Activated B cell treated with CpG ODN at 0.5 μM for 24 hours (primary cell): ENCODE measurements at regions of chr6 and their contacts with region 1.

Region 1: DNA sequence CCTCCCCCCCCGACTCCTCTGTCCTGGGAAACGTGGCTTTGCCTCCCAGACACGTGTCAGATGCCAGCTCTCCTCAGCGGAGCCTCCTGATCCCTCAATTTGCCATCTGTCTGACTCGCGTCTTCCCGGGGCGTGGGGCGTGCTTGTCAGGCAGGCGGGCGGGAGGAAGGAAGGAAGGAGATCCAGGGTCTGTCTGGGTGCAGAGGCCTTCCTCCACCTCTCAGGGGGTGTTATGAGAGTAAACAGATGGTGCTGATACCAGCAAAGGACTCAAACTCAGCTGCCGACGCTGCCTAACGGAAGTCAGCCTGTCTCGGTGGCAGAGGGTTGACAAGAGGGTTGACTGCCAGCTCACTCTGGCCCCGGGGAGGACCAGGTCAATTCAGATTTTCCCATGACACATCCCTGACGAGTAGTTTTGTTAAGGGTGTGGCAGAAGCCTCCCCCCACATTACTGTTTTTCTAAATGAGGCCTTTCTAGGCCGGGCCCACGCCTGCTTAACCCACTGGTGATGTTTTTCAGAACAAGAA is 17.0 kb downstream of the UQCC2 start:
- DNase-seq: no peak
- ATAC-seq: peak; percentile 14
- H3K4me3 Mint-ChIP-seq: peak overlapping the region; percentile 24
- H3K27ac Mint-ChIP-seq: peak overlapping the region; percentile 83
- H3K4me1 Mint-ChIP-seq: peaks cover 78% of the 10 kb centered on the region
- H3K27me3 Mint-ChIP-seq: no peaks in the 10 kb centered on the region
- CTCF ChIP-seq: no peak

Region 2: DNA sequence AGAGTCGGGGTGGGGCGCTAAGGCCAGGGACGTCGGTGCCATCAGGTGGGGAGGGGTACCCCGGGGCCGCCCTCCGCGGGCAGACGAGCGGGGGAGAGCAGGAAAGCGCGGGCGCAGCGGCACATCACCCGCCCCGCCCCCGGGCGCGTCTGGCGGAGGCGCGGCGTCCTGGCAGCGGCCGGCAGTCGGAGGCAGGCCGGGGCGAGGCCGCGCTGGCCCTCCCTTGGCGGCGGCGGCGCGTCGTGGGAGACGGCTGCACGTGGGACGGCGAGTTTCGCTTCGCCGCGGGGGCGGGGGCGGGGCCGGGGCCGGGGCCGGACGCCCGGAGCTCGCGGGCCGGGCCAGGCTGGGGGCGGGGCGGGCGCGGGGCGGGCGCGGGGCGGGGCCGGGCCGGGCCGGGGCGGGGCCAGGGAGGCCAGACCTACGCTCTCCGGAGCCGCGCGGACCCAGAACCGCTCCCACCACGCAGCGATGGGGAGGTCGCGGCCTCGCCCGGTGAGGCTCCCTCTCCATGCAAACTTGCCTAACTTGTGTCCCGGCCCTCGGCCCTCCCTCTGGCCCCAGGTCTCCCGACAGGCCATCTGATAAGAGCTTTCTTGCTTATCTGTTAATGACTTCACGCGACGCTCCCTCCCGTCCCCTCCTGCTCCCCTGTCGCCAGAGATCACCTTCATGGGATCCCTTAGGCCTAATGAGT is 60.9 kb before region 1 on chr6:
- CTCF ChIA-PET with region 1: no interaction called
- POLR2A ChIA-PET with region 1: no interaction called
- intact Hi-C with region 1: loop called (anchors 2 kb)
- DNase-seq: peak; percentile 58
- ATAC-seq: peak; percentile 92
- H3K4me3 Mint-ChIP-seq: peak overlapping the region; percentile 81
- H3K27ac Mint-ChIP-seq: peak overlapping the region; percentile 14
- H3K4me1 Mint-ChIP-seq: peaks cover 53% of the 10 kb centered on the region
- H3K27me3 Mint-ChIP-seq: no peaks in the 10 kb centered on the region
- CTCF ChIP-seq: no peak

Region 3: GRCh38 chr6:33668927-33669326 is 25.5 kb before region 1 on chr6:
- CTCF ChIA-PET with region 1: no interaction called
- POLR2A ChIA-PET with region 1: no interaction called
- intact Hi-C with region 1: no loop called
- DNase-seq: no peak
- ATAC-seq: peak; percentile 91
- H3K4me3 Mint-ChIP-seq: no peak overlapping the region
- H3K27ac Mint-ChIP-seq: peak overlapping the region; percentile 65
- H3K4me1 Mint-ChIP-seq: peaks cover 14% of the 10 kb centered on the region
- H3K27me3 Mint-ChIP-seq: no peaks in the 10 kb centered on the region
- CTCF ChIP-seq: no peak

Region 4: GRCh38 chr6:33711140-33712129 is 17.0 kb after region 1 on chr6 and contains the start of gene UQCC2:
- CTCF ChIA-PET with region 1: interaction called, 3 read pairs
- POLR2A ChIA-PET with region 1: interaction called, 10 read pairs
- intact Hi-C with region 1: loop called (anchors 2 kb)
- DNase-seq: peak; percentile 93
- ATAC-seq: peak; percentile 86
- H3K4me3 Mint-ChIP-seq: peak within 1 kb of the TSS; percentile 98
- H3K27ac Mint-ChIP-seq: peak within 1 kb of the TSS; percentile 99
- H3K4me1 Mint-ChIP-seq: peaks cover 29% of the 10 kb centered on the region
- H3K27me3 Mint-ChIP-seq: no peaks in the 10 kb centered on the region
- CTCF ChIP-seq: no peak
- total RNA-seq, gene UQCC2: 26.2 and 37.5 TPM in 2 replicates